ENCODE measurements at regions of chr2 and their contacts with region 1.

Region 1: GRCh38 chr2:206556357-206556949 is 85.8 kb upstream of the FAM237A start:
- DNase-seq: no peak
- H3K4me3 ChIP-seq: no peak overlapping the region
- H3K27ac ChIP-seq: no peak overlapping the region
- H3K4me1 ChIP-seq: no peaks in the 10 kb centered on the region
- H3K27me3 ChIP-seq: no peaks in the 10 kb centered on the region
- CTCF ChIP-seq: peak in 1 of 3 experiments; percentile 62; a peak in 2 of 4 replicates
- EP300 ChIP-seq: no peak
- POLR2A ChIP-seq: no peak
- RAD21 ChIP-seq: peak; percentile 52 to 58

Region 2: DNA sequence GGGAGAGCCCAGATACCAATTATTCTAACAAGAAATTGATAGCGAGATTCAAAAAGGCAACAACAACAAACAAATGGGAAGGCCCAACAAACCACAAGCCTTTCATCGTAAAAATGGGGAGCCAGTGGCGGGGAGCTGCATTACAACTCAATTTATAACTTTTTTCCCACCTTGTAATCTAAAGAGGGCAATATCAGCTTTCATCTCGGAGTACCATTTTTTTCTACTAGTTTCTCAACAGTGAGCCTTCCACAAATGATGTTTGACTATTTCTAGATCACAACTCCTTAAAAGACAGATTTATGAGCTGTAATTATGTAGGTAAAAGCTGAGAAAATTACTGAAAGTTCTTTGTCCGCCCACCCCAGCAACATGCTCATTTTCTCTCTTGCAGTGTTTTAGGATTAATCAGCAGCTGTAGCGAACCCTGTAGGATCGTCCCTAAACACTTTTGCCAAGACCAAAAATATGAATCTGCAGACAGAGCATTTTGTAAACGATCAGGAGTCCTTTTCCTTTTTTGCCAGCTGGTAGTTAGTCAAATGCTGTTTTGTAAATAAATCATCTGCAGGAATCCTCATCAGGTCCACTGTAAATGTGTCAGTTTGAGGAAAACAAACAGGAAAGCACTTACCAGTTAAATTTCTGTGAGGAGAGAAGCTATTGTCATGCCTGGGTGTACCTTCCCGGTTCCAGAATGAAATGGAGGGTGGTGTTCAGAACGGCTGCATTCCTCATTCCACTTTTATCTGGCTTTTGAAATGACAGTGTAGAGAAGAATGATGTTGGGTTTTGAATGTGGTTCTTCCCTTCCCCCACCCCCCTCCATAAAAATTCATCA is 343.6 kb before region 1 on chr2:
- CTCF ChIA-PET with region 1: no interaction called
- POLR2A ChIA-PET with region 1: no interaction called
- DNase-seq: no peak
- H3K4me3 ChIP-seq: peak overlapping the region in 1 of 4 experiments; percentile 37; a peak in 1 of 8 replicates
- H3K27ac ChIP-seq: no peak overlapping the region
- H3K4me1 ChIP-seq: peaks cover 2 to 16% (median 8%) of the 10 kb centered on the region in 4 experiments; a peak in 5 of 7 replicates
- H3K27me3 ChIP-seq: no peaks in the 10 kb centered on the region
- CTCF ChIP-seq: no peak
- EP300 ChIP-seq: no peak
- POLR2A ChIP-seq: no peak
- RAD21 ChIP-seq: no peak

Region 3: DNA sequence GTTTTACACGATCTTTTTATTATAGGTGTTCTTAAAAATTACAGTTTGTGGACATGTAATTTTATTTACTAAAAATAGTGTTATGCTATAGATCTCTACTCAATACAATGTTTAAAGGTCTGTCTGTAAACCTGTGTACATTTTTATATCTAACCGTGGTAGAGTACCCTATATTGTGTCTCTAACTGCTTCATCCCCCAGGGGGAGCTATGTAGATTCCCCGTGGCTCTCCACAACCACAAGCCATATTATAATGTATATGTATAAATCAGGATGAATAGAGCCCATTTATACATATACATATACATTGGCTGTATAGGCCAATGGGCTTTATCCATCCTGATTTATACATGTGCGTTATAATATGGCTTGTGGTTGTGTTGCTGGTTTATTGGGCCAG is 53.7 kb before region 1 on chr2:
- CTCF ChIA-PET with region 1: interaction called, 10 read pairs
- POLR2A ChIA-PET with region 1: no interaction called
- DNase-seq: no peak
- H3K4me3 ChIP-seq: no peak overlapping the region
- H3K27ac ChIP-seq: no peak overlapping the region
- H3K4me1 ChIP-seq: no peaks in the 10 kb centered on the region
- H3K27me3 ChIP-seq: no peaks in the 10 kb centered on the region
- CTCF ChIP-seq: peak in 2 of 3 experiments; percentile 5 to 17; a peak in 2 of 4 replicates
- EP300 ChIP-seq: no peak
- POLR2A ChIP-seq: no peak
- RAD21 ChIP-seq: 0 out of 4 replicates have a peak, but pooled peaks of 1 of the 2 experiments have one; percentile 12

Region 4: DNA sequence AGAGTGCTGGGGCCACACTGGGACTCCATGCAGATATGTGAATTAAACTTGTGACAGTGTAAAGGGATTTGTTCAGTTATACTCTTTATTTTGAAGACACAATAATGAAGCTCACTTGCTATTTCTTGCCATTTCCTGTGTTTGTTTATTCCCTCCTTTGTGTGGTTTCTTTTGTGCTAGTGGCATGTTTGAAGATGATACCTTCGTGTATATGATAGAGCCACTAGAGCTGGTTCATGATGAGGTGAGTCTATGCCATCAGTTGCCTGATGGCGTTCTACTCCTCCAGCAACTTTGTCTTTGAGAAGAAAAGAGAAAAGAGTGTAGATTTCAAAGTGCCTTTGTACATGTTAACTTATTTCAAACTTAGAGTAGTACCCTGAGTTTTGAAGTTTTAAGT is 13.4 kb before region 1 on chr2:
- CTCF ChIA-PET with region 1: interaction called, 30 read pairs
- POLR2A ChIA-PET with region 1: interaction called, 3 read pairs
- DNase-seq: no peak
- H3K4me3 ChIP-seq: no peak overlapping the region
- H3K27ac ChIP-seq: no peak overlapping the region
- H3K4me1 ChIP-seq: no peaks in the 10 kb centered on the region
- H3K27me3 ChIP-seq: no peaks in the 10 kb centered on the region
- CTCF ChIP-seq: no peak
- EP300 ChIP-seq: no peak
- POLR2A ChIP-seq: no peak
- RAD21 ChIP-seq: no peak

Region 5: DNA sequence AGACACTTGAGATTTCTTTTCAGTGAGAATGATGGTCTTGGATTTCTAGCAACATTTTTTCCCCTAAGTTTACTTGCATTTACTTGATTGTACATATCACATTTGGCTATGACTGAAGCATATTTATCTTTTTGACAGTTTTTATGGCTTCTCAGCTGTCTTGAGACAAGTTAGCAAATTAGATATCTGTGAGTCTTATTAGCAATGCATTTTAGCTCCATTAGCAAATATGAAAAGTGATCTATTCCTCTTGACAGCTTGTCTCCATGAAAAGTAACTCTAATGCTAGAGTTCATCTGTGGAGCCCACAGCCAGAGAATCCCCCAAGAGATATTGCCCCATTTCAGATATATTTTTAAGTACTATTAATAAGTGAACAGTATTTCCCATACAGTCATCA is 13.7 kb after region 1 on chr2:
- CTCF ChIA-PET with region 1: interaction called, 21 read pairs
- POLR2A ChIA-PET with region 1: no interaction called
- DNase-seq: no peak
- H3K4me3 ChIP-seq: no peak overlapping the region
- H3K27ac ChIP-seq: no peak overlapping the region
- H3K4me1 ChIP-seq: no peaks in the 10 kb centered on the region
- H3K27me3 ChIP-seq: no peaks in the 10 kb centered on the region
- CTCF ChIP-seq: no peak
- EP300 ChIP-seq: no peak
- POLR2A ChIP-seq: no peak
- RAD21 ChIP-seq: no peak